Right lobe of liver (tissue), 6 donors: ENCODE measurements at regions of chr1 and their contacts with region 1.

Region 1: GRCh38 chr1:34460193-34460592 is 283.5 kb downstream of the C1orf94 start:
- DNase-seq: peak; percentile 29 to 60 (median 59)
- ATAC-seq: peak; percentile 61 to 83 (median 63)
- H3K4me3 ChIP-seq: no peak overlapping the region
- H3K27ac ChIP-seq: no peak overlapping the region
- H3K4me1 ChIP-seq: no peaks in the 10 kb centered on the region
- H3K27me3 ChIP-seq: no peaks in the 10 kb centered on the region
- CTCF ChIP-seq: peak; percentile 48 to 75 (median 63)
- POLR2A ChIP-seq: no peak

Region 2: DNA sequence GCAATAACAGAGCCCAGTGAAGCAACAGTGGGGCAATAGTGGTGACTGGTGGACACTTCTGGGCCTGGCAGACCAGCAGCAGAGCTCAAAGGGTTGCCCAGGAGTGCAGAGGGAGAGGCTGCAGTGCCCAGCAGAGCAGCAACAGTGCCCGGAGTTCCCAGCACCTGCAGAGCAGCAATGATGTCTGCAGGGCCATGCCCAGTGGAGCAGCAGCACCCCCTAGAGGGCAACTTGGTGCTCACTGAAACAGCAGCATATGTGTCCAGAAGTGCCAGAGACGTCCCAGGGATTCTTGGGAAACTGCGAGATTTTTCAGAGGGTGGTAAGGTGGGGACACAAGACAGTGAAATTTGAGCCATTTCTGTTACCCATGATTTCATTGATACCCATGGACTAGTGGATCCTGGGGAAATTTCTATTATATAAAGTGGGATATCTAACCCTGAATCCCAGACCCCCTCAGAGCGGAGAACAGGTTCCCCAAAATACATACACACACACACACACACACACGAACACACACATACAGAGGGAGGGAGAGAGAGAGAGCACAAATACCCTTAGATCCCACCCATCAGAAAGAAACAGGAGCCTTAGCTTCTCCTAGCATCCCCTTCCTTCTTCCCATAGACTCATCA is 137.8 kb after region 1 on chr1:
- intact Hi-C with region 1: loop called in 1 of 2 experiments (anchors 10 kb)
- DNase-seq: peak; percentile 76 to 82 (median 78)
- ATAC-seq: peak; percentile 85 to 98 (median 94)
- H3K4me3 ChIP-seq: no peak overlapping the region
- H3K27ac ChIP-seq: no peak overlapping the region
- H3K4me1 ChIP-seq: no peaks in the 10 kb centered on the region
- H3K27me3 ChIP-seq: no peaks in the 10 kb centered on the region
- CTCF ChIP-seq: peak; percentile 82 to 88 (median 85)
- POLR2A ChIP-seq: no peak